ENCODE measurements at regions of chr10 and their contacts with region 1.

Region 1: DNA sequence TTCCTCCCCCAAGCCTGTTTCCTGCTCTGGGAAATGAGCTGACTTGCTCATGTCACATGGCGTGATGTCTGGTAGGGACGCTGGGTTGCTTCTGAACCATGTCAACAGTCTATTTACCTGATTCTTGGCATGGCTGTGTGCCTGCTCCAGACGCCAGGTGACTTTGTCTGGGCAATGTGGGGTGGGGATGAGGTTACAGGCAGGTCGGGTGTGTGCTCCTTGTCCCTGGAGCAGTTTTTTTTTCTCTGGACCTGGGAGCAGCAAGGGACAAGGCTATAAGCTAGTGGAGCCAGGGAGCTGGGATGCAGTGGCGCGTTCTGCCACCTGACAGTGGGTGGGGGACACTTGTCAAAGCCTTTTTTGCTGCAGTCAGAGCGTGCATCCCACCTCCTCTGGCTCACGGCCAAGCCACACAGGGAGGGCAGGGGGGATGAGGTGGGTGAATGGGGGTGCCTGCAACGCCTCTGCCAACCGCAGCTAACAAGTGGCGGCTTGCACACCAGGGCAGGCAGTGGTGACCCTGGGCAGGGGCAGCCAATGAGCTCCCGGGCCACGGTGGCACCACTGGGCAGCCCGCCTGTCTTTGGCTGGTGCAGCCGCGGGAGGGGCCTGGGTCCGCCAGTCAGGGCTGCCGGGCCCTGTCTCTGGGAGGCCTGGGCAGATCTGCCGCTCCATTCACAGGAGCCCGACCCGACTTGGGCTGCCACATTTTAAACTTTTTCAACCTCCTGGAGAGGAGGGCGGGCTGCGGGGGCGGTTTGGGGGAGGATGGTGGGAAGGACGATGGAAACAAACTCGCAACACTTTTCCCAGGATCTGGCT is 22.9 kb downstream of the DNAJB12 start:
- DNase-seq: peak; percentile 93
- H3K4me3 ChIP-seq: peak overlapping the region; percentile 50
- H3K27ac ChIP-seq: peak overlapping the region; percentile 80
- H3K4me1 ChIP-seq: peaks cover 83% of the 10 kb centered on the region
- CTCF ChIP-seq: peak; percentile 45

Region 2: DNA sequence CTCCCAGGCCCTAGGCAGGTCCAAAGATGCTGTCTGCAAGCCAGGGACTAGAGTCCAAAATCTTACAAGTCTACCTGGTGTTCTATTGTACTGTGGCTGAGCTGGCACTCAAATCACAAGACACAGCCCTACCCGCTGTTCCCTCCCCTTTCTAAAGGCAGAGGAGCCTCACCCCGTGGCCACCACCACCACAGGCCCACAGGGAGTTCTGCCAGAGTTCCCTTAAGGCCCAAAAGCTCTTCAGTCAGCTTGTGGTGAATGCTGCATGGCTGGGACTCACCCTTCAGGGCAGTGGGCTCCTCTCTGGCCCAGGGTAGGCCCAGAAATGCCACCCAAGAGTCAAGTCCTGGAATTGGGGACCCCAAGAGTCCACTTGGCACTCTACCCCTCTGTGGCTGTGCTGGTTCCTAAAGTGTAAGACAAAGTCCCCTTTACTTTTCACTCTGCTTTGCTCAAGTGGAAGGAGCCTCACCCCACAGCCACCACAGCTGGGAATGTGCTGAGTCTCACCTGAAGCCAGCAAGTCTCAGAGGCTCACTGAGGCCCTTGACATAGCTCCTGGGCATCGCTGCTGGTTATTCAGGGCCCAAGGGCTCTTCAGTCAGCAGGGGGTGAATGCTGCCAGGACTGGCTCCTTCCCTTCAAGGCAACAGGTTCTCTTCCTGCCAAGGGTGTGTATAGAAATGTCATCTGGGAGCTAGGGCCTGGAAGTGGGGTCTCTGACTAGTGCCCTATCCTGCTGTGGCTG is 432.0 kb before region 1 on chr10:
- CTCF ChIA-PET with region 1: no interaction called
- POLR2A ChIA-PET with region 1: no interaction called
- intact Hi-C with region 1: loop called (anchors 5 kb)
- DNase-seq: no peak
- H3K4me3 ChIP-seq: no peak overlapping the region
- H3K27ac ChIP-seq: no peak overlapping the region
- H3K4me1 ChIP-seq: peaks cover 3% of the 10 kb centered on the region
- CTCF ChIP-seq: no peak

Region 3: GRCh38 chr10:72126184-72126871 is 205.5 kb before region 1 on chr10:
- CTCF ChIA-PET with region 1: no interaction called
- POLR2A ChIA-PET with region 1: interaction called, 4 read pairs
- intact Hi-C with region 1: loop called (anchors 2 kb)
- DNase-seq: peak; percentile 62
- H3K4me3 ChIP-seq: no peak overlapping the region
- H3K27ac ChIP-seq: no peak overlapping the region
- H3K4me1 ChIP-seq: no peaks in the 10 kb centered on the region
- CTCF ChIP-seq: peak; percentile 78

Region 4: DNA sequence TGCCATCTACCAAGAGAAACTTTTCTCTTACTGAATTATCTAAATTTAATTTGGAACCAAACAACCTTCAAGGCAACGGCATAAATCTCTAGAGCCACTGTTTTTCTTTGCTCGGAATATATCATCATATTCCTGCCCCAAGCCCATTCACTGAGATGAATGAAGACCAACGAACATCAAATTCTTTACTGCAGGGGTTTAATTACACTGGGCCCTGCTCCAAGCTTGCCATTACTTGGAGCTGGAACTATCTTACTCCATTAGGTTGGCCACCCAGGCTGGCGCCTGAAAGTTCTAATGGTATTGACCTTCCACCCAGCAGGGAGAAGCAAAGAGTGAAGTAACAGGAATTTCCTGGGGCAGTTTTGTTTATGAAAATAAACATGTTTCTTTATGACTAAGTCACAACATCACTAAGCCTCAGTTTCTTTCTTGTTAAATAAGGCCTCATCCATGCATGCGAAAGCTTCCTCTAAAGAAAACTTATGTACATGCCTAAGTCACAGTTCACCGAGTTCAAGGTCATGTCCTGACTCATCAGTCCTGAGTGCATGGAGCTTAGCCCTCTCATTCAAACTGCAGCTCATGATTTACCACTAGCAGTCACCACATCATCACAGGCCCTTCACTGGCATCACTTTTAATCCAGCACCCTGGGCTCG is 158.0 kb before region 1 on chr10:
- CTCF ChIA-PET with region 1: no interaction called
- POLR2A ChIA-PET with region 1: no interaction called
- intact Hi-C with region 1: no loop called
- DNase-seq: peak; percentile 9
- H3K4me3 ChIP-seq: no peak overlapping the region
- H3K27ac ChIP-seq: no peak overlapping the region
- H3K4me1 ChIP-seq: peaks cover 19% of the 10 kb centered on the region
- CTCF ChIP-seq: no peak

Region 5: GRCh38 chr10:72248468-72249151 is 83.2 kb before region 1 on chr10:
- CTCF ChIA-PET with region 1: interaction called, 4 read pairs
- POLR2A ChIA-PET with region 1: interaction called, 14 read pairs
- intact Hi-C with region 1: loop called (anchors 1 kb)
- DNase-seq: peak; percentile 95
- H3K4me3 ChIP-seq: peak overlapping the region; percentile 57
- H3K27ac ChIP-seq: peak overlapping the region; percentile 95
- H3K4me1 ChIP-seq: peaks cover 59% of the 10 kb centered on the region
- CTCF ChIP-seq: no peak

Region 6: DNA sequence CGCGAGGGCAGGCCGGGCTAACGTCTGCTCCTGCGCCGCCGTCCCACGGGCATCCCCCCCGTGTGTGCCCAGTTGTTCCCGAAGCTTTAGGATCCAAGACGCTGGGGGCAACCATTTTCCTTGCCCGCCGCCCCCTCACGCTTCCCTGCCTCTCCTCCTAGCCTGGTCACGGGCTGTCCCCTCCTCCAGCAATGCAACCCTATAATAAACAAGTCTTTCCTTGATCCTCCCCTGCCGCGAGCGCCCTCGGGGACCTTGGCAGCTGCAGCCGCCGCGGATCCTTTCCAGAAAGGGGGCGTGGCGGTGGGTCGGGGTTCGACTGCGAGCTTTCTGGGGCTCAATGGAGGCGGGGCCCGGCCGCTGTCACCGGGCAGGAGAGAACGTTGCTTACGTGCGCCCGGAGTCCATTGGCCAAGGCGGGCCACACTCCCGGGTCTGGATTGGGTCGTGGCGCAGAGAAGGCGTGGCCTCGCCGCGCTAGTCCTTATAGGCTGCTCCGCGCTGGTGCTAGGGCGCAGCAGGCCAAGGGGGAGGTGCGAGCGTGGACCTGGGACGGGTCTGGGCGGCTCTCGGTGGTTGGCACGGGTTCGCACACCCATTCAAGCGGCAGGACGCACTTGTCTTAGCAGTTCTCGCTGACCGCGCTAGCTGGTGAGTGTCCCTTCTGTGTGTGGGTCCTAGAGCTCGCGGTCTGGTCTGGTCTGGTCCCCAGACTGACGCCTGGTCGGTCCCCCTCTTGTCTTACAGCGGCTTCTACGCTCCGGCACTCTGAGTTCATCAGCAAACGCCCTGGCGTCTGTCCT is 58.2 kb before region 1 on chr10 and contains the start of gene DDIT4:
- CTCF ChIA-PET with region 1: interaction called, 6 read pairs
- POLR2A ChIA-PET with region 1: interaction called, 11 read pairs
- intact Hi-C with region 1: loop called (anchors 1 kb)
- DNase-seq: peak; percentile 99
- H3K4me3 ChIP-seq: peak within 1 kb of the TSS; percentile 77
- H3K27ac ChIP-seq: peak within 1 kb of the TSS; percentile 22
- H3K4me1 ChIP-seq: peaks cover 39% of the 10 kb centered on the region
- CTCF ChIP-seq: no peak
- total RNA-seq, gene DDIT4: 102 and 105 TPM in 2 replicates

Region 7: GRCh38 chr10:72319416-72320254 is 12.2 kb before region 1 on chr10:
- CTCF ChIA-PET with region 1: interaction called, 5 read pairs
- POLR2A ChIA-PET with region 1: interaction called, 91 read pairs
- intact Hi-C with region 1: loop called (anchors 1 kb)
- DNase-seq: peak; percentile 95
- H3K4me3 ChIP-seq: peak overlapping the region; percentile 66
- H3K27ac ChIP-seq: peak overlapping the region; percentile 97
- H3K4me1 ChIP-seq: peaks cover 82% of the 10 kb centered on the region
- CTCF ChIP-seq: 0 out of 2 replicates have a peak, but pooled peaks have one; percentile 12

Region 8: GRCh38 chr10:72426986-72427385 is 95.2 kb after region 1 on chr10:
- CTCF ChIA-PET with region 1: no interaction called
- POLR2A ChIA-PET with region 1: no interaction called
- intact Hi-C with region 1: no loop called
- DNase-seq: no peak
- H3K4me3 ChIP-seq: no peak overlapping the region
- H3K27ac ChIP-seq: no peak overlapping the region
- H3K4me1 ChIP-seq: no peaks in the 10 kb centered on the region
- CTCF ChIP-seq: no peak

Region 9: GRCh38 chr10:72784551-72785351 is 452.9 kb after region 1 on chr10:
- CTCF ChIA-PET with region 1: no interaction called
- POLR2A ChIA-PET with region 1: no interaction called
- intact Hi-C with region 1: no loop called
- DNase-seq: no peak
- H3K4me3 ChIP-seq: no peak overlapping the region
- H3K27ac ChIP-seq: no peak overlapping the region
- H3K4me1 ChIP-seq: no peaks in the 10 kb centered on the region
- CTCF ChIP-seq: no peak

Measured in OCI-LY7 (cell line).